Natural killer cell (primary cell): ENCODE measurements at regions of chr9 and their contacts with region 1.

Region 1: DNA sequence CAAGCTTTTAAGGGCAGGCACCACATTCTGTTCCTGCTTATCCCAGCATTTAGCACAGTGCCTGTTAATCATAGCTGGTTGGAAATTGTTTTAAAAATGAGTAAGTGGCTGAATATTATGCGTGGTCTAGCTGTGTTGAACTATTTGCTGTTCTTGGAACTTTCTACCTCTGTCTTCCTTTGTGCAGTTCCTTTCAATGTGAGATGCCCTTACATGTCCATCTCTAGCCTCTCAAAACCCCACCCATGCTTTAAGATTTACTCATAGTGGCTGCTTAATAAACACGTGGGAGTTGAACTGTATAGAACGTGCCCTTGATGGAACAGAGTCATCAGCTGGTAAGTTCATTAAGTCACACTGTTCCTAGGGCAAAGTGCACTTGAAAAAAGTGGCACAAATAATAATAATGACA is 34.5 kb downstream of the C9orf57 start:
- DNase-seq: no peak
- ATAC-seq: no peak
- H3K4me3 ChIP-seq: no peak overlapping the region
- H3K4me3 Mint-ChIP-seq: no peak overlapping the region
- H3K27ac ChIP-seq: no peak overlapping the region
- H3K27ac Mint-ChIP-seq: no peak overlapping the region
- H3K4me1 ChIP-seq: peaks cover 4% of the 10 kb centered on the region
- H3K4me1 Mint-ChIP-seq: no peaks in the 10 kb centered on the region
- H3K27me3 ChIP-seq: no peaks in the 10 kb centered on the region
- H3K27me3 Mint-ChIP-seq: no peaks in the 10 kb centered on the region
- CTCF ChIP-seq: no peak

Region 2: GRCh38 chr9:71806901-71807307 is 219.0 kb before region 1 on chr9:
- intact Hi-C with region 1: loop called (anchors 1 kb)
- DNase-seq: peak; percentile 31 to 81
- ATAC-seq: peak; percentile 90 to 99 (median 98)
- H3K4me3 ChIP-seq: no peak overlapping the region
- H3K4me3 Mint-ChIP-seq: no peak overlapping the region
- H3K27ac ChIP-seq: no peak overlapping the region
- H3K27ac Mint-ChIP-seq: peak overlapping the region; percentile 39 to 65
- H3K4me1 ChIP-seq: no peaks in the 10 kb centered on the region
- H3K4me1 Mint-ChIP-seq: peaks cover 6 to 7% of the 10 kb centered on the region in 2 donors
- H3K27me3 ChIP-seq: no peaks in the 10 kb centered on the region
- H3K27me3 Mint-ChIP-seq: no peaks in the 10 kb centered on the region
- CTCF ChIP-seq: peak; percentile 79